CD4-positive, alpha-beta memory T cell (primary cell): ENCODE measurements at regions of chr6 and their contacts with region 1.

Region 1: GRCh38 chr6:149043476-149044130 is 273.9 kb upstream of the TAB2 start:
- DNase-seq: no peak
- H3K4me3 ChIP-seq: no peak overlapping the region
- H3K4me3 Mint-ChIP-seq: peak overlapping the region in 1 of 8 donors; percentile 22
- H3K27ac ChIP-seq: no peak overlapping the region
- H3K27ac Mint-ChIP-seq: peak overlapping the region in 1 of 7 donors; percentile 64
- H3K4me1 ChIP-seq: peaks cover 40% of the 10 kb centered on the region
- H3K4me1 Mint-ChIP-seq: peaks cover 34 to 47% (median 41%) of the 10 kb centered on the region in 4 donors
- H3K27me3 ChIP-seq: no peaks in the 10 kb centered on the region
- H3K27me3 Mint-ChIP-seq: no peaks in the 10 kb centered on the region

Region 2: GRCh38 chr6:149060300-149060997 is 16.8 kb after region 1 on chr6:
- CTCF ChIA-PET with region 1: interaction called, 49 read pairs
- POLR2A ChIA-PET with region 1: interaction called, 118 read pairs
- intact Hi-C with region 1: no loop called
- DNase-seq: peak; percentile 53 to 75 (median 62)
- H3K4me3 ChIP-seq: peak overlapping the region in 1 of 2 donors; percentile 34
- H3K4me3 Mint-ChIP-seq: peak overlapping the region; percentile 65 to 87 (median 80)
- H3K27ac ChIP-seq: peak overlapping the region; percentile 47
- H3K27ac Mint-ChIP-seq: peak overlapping the region; percentile 93 to 96 (median 94)
- H3K4me1 ChIP-seq: peaks cover 46% of the 10 kb centered on the region
- H3K4me1 Mint-ChIP-seq: peaks cover 27 to 52% (median 34%) of the 10 kb centered on the region in 4 donors
- H3K27me3 ChIP-seq: no peaks in the 10 kb centered on the region
- H3K27me3 Mint-ChIP-seq: no peaks in the 10 kb centered on the region

Region 3: GRCh38 chr6:149065658-149066556 is 22.3 kb after region 1 on chr6:
- CTCF ChIA-PET with region 1: interaction called, 49 read pairs
- POLR2A ChIA-PET with region 1: interaction called, 118 read pairs
- intact Hi-C with region 1: loop called (anchors 2 kb)
- DNase-seq: peak; percentile 80 to 88 (median 85)
- H3K4me3 ChIP-seq: peak overlapping the region in 1 of 2 donors; percentile 31
- H3K4me3 Mint-ChIP-seq: peak overlapping the region; percentile 47 to 87 (median 82)
- H3K27ac ChIP-seq: peak overlapping the region; percentile 73
- H3K27ac Mint-ChIP-seq: peak overlapping the region; percentile 63 to 99 (median 98)
- H3K4me1 ChIP-seq: peaks cover 46% of the 10 kb centered on the region
- H3K4me1 Mint-ChIP-seq: peaks cover 25 to 55% (median 29%) of the 10 kb centered on the region in 4 donors
- H3K27me3 ChIP-seq: no peaks in the 10 kb centered on the region
- H3K27me3 Mint-ChIP-seq: no peaks in the 10 kb centered on the region